ENCODE measurements at regions of chr2 and their contacts with region 1.

Region 1: GRCh38 chr2:69816923-69817542 is 12.4 kb upstream of the GMCL1 start:
- DNase-seq: peak; percentile 85
- ATAC-seq: peak; percentile 75
- H3K4me3 ChIP-seq: no peak overlapping the region
- H3K27ac ChIP-seq: no peak overlapping the region
- H3K4me1 ChIP-seq: peaks cover 0 to 3% of the 10 kb centered on the region in 2 experiments; a peak in 1 of 4 replicates
- H3K27me3 ChIP-seq: no peaks in the 10 kb centered on the region
- CTCF ChIP-seq: peak; percentile 79 to 92 (median 87)
- POLR2A ChIP-seq: no peak
- RAD21 ChIP-seq: peak; percentile 87

Region 2: DNA sequence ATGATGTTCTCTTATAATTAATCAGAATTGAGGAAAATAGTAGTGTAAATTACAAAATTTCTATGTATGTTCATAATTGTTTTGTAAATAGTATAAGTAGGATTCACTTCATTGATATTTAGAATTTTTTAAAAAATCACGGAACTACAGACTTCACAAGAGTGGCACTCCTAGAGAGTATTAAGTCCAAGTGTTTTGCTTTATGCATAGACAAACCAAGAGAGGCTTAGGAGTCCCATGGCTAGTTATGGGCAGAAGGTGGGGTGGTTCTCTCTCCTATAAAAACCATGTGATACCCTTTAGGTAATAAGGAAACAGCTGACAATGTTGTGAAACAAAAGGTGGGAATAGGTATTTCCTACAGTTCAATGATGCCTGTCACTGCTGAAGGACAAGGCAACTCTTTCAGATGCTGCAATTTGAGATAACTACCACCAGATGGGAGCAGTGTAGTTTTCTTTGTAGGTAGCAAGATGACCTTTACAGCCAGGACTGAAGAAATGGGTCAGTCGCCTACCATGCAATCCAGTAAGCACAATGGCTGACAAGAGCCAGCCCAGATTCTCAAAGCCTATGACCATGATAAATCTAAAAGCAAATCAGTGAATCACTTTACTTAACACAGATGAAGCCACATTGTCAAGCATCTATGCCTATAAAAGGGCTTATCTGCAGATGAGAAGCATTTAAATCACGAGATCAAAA is 257.4 kb before region 1 on chr2:
- CTCF ChIA-PET with region 1: interaction called, 4 read pairs
- POLR2A ChIA-PET with region 1: no interaction called
- RAD21 ChIA-PET with region 1: no interaction called
- intact Hi-C with region 1: loop called (anchors 2 kb)
- DNase-seq: peak; percentile 66
- ATAC-seq: peak; percentile 96
- H3K4me3 ChIP-seq: no peak overlapping the region
- H3K27ac ChIP-seq: no peak overlapping the region
- H3K4me1 ChIP-seq: peaks cover 0 to 4% of the 10 kb centered on the region in 2 experiments; a peak in 1 of 4 replicates
- H3K27me3 ChIP-seq: no peaks in the 10 kb centered on the region
- CTCF ChIP-seq: peak; percentile 68 to 88 (median 82)
- POLR2A ChIP-seq: no peak
- RAD21 ChIP-seq: peak; percentile 96

Region 3: GRCh38 chr2:69741619-69742466 is 75.2 kb before region 1 on chr2 and contains the start of gene ANXA4:
- CTCF ChIA-PET with region 1: interaction called, 6 read pairs
- POLR2A ChIA-PET with region 1: no interaction called
- RAD21 ChIA-PET with region 1: interaction called, 3 to 4 read pairs
- intact Hi-C with region 1: loop called (anchors 5 kb)
- DNase-seq: peak; percentile 62
- ATAC-seq: peak; percentile 92
- H3K4me3 ChIP-seq: peak within 1 kb of the TSS; percentile 77 to 95
- H3K27ac ChIP-seq: peak within 1 kb of the TSS; percentile 79
- H3K4me1 ChIP-seq: peaks cover 18 to 29% of the 10 kb centered on the region in 2 experiments
- H3K27me3 ChIP-seq: no peaks in the 10 kb centered on the region
- CTCF ChIP-seq: no peak
- POLR2A ChIP-seq: peak; percentile 79
- RAD21 ChIP-seq: no peak; the same call in none of the 2 replicates
- total RNA-seq, gene ANXA4: 64.6 TPM

Region 4: DNA sequence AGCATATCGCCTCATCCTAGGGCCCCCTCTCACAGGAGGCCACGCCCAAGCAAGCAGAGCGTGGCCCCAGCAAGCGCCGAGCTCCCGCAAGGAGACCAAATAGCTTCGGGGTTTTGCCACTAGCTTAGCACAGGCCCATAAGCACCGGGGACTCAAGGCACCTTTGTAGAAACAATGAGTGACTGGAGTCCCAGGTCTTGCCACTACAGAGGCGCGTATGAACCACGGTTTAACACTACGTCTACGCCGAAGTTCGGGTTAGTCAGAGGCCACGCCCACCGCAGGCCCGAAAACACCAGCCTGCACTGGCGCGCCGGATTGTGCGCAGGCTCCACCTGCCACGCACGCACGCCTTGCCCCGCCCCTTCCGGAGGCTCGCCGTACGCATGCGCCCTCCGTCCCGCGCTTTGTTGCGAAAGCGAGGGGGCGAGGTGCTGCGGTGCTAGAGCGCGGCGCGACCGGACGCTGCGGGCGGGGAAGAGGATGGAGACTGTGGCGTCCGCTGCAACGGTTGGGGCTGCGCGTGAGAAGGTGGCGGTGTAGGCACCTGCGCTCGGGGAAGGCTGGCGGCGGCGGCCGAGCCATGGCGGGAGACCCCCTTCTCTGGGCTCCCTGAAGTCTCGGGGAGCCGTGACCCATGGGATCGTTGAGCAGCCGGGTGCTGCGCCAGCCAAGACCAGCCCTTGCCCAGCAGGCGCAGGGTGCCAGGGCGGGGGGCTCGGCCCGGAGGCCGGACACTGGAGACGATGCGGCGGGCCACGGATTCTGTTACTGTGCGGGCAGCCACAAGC is 12.4 kb after region 1 on chr2 and contains the start of gene GMCL1:
- CTCF ChIA-PET with region 1: interaction called, 11 read pairs
- POLR2A ChIA-PET with region 1: no interaction called
- RAD21 ChIA-PET with region 1: no interaction called
- intact Hi-C with region 1: no loop called
- DNase-seq: peak; percentile 87
- ATAC-seq: peak; percentile 97
- H3K4me3 ChIP-seq: peak within 1 kb of the TSS; percentile 80 to 86
- H3K27ac ChIP-seq: peak within 1 kb of the TSS; percentile 73
- H3K4me1 ChIP-seq: peaks cover 10 to 16% of the 10 kb centered on the region in 2 experiments; a peak in 3 of 4 replicates
- H3K27me3 ChIP-seq: no peaks in the 10 kb centered on the region
- CTCF ChIP-seq: no peak
- POLR2A ChIP-seq: peak; percentile 79
- RAD21 ChIP-seq: no peak
- total RNA-seq, gene GMCL1: 16.7 TPM

Region 5: DNA sequence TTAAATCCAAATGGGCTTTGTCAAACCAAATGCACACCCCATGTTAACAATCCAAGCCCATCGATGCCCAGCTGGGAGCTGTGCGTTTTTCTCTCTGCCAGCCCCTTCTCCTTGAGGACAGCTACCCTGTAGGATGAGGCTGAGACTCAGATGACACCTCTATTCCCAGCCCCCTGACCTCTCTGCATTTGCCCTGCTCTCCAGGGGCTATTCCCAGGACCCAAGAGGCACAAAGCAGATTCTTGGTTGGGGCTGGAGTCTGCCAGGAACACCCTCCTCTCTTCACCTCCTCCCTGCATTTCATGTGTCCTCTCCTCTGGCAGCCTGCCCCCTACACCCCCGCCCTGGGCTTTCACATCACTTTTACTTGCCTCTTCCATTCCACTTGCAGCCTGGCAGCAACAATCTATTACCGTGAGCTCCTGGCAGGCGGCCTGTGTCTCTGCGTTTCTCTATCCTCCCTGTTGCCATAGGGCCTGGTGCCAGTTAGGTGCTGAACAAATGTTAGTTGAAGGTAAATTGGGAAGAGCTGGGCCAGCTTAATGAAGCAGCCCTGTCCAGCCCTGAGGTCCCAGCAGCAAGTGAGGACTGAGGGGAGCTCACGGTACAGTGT is 899.2 kb after region 1 on chr2:
- CTCF ChIA-PET with region 1: no interaction called
- POLR2A ChIA-PET with region 1: no interaction called
- RAD21 ChIA-PET with region 1: no interaction called
- intact Hi-C with region 1: no loop called
- DNase-seq: no peak
- ATAC-seq: no peak
- H3K4me3 ChIP-seq: no peak overlapping the region
- H3K27ac ChIP-seq: no peak overlapping the region
- H3K4me1 ChIP-seq: no peaks in the 10 kb centered on the region
- H3K27me3 ChIP-seq: peaks cover 5% of the 10 kb centered on the region; the same call in 1 of the 2 replicates
- CTCF ChIP-seq: no peak
- POLR2A ChIP-seq: no peak
- RAD21 ChIP-seq: no peak

Measured in HCT116 (cell line).